PC-3 (cell line): ENCODE measurements at regions of chr5 and their contacts with region 1.

Region 1: DNA sequence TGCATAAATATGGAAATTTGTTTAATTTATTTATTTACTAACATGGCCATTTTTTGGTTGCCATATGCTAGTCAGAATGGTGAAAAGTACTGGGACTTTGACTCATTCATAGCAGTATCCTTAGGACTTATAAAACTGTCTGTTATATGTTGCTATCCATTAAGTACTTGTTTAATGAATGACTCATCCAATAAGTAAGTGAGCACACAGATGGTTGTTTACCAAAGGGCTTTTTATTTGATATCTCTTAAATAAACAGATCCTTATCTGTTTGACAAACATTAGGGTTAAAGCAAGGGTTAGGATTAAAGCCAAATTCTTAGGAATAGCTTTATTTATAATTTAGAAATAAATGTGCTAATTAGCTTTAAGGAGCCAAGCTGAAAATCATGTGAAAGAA is 183.4 kb downstream of the FBXO4 start:
- DNase-seq: peak; percentile 90
- ATAC-seq: peak; percentile 92
- H3K4me3 ChIP-seq: no peak overlapping the region
- H3K27ac ChIP-seq: peak overlapping the region; percentile 76
- H3K4me1 ChIP-seq: peaks cover 29% of the 10 kb centered on the region
- H3K27me3 ChIP-seq: no peaks in the 10 kb centered on the region; the same call in 1 of the 2 replicates
- CTCF ChIP-seq: no peak

Region 2: GRCh38 chr5:41967852-41968719 is 140.4 kb before region 1 on chr5:
- CTCF ChIA-PET with region 1: no interaction called
- POLR2A ChIA-PET with region 1: interaction called, 16 read pairs
- intact Hi-C with region 1: no loop called
- DNase-seq: no peak
- ATAC-seq: no peak
- H3K4me3 ChIP-seq: no peak overlapping the region
- H3K27ac ChIP-seq: no peak overlapping the region
- H3K4me1 ChIP-seq: no peaks in the 10 kb centered on the region
- H3K27me3 ChIP-seq: no peaks in the 10 kb centered on the region
- CTCF ChIP-seq: peak; percentile 63

Region 3: DNA sequence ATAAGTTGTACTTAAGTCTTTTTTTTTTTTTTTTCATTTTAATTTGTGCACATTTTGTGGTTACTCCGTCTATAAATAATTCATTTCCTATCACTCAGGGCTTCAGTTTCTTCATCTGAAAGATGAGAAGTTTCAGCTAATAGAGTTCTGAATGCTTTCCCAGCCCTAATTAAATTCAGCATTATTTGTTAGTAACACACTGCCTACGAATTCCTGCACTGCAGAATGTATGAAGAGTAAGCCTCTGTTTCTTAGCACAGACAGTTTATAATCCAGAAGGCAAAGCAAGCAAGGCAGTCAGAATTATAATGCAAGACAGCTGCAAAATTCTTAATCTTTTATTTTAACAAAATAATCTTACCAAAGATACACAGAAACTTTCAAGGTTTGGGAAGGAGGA is 176.8 kb after region 1 on chr5:
- CTCF ChIA-PET with region 1: no interaction called
- POLR2A ChIA-PET with region 1: no interaction called
- intact Hi-C with region 1: no loop called
- DNase-seq: no peak
- ATAC-seq: no peak
- H3K4me3 ChIP-seq: no peak overlapping the region
- H3K27ac ChIP-seq: no peak overlapping the region
- H3K4me1 ChIP-seq: peaks cover 4% of the 10 kb centered on the region; the same call in 1 of the 2 replicates
- H3K27me3 ChIP-seq: no peaks in the 10 kb centered on the region
- CTCF ChIP-seq: no peak